ENCODE measurements at regions of chr17 and their contacts with region 1.

Region 1: DNA sequence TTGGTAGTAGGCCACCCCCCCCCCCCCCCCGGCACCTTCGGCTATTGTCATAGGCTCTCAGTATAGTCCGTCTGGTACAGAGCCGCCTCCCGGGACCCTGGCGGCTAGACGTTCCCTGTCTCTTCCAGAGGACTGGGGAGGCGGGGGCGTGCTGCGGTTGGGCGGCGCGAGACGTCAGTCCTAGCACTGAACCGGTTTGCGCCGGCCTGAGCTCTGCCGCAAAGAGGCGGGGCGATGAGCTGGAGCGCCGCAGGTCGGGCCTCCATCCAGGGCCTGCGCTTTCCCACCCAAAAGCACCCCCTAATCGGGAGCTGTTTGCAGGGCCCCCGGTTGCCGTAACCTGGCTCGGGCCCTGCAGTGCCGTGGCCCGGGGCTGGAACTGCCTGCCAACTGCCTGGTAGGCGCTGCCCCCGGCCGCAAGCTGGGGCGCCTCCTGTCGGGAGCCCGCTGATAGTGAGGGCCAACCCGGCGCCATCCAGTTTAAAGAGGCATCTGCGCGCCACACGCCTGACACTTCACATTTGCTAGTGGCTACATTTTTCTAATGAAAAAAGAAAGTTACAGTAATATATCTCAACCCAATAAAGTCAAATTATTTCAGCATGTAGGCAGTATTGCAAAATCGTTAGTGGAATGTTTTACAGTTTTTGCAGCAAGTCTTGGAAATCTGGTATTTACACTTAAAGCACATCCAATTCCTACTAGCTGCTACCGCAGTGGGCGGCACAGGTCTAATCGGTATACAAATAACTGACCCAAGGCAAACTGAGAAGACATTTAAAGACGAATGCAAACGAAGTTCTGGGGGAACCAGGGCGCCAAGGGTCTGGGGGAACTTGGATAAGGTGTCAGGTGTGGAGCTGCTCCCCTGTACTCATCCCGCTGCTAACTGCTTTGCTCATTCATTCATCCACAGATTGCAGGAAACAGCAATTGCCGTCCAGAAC is 748 bp upstream of the USP22 start:
- DNase-seq: peak in 1 of 2 donors; percentile 95
- ATAC-seq: peak; percentile 82
- H3K4me3 ChIP-seq: peak overlapping the region; percentile 61 to 97 (median 82)
- H3K27ac ChIP-seq: peak overlapping the region; percentile 86 to 98 (median 96)
- H3K4me1 ChIP-seq: peaks cover 25 to 33% of the 10 kb centered on the region in 2 donors
- H3K27me3 ChIP-seq: no peaks in the 10 kb centered on the region
- CTCF ChIP-seq: peak; percentile 94 to 98 (median 97)
- POLR2A ChIP-seq: no peak

Region 2: DNA sequence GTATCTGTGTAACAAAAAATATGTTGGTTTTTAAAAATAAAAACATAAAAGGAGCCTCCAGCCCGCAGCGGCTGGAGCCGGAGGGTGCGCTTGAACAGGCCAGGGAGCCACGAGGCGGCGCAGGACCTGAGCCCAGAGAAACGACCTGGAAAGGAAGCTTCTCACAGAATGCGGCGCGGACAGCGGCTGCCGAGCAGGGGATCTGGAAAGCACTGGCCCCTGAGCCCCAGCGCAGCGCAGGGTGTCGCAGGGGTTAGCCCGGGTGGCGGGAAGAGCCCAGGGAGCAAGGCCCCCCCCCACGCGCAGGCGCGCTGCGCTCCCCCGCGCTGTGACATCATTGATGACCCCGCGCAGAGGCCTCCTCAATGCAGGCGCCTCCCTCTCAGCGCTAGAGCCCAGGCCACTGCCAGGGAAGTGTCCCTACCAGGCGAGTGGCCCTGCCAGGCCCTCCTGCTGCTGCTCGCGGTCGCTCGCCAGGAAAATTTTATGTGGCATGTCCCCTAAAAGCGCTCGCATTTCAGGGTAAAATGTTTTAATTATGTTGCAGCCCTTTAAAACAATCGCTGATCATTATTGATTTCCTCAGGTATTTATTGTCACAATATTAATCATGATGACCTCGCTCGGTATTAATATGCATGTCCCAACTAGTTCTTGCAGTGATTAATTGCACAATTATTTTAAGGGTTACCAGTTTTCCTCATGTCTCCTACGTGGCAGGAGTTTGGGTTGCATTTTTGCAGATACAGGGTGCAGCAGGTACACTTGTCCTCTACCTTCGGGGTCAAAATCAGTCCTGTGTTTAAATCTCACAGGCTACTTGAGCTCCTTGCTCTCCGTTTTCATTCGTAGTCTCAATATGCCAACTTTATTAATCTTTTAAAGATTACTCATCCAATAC is 134.9 kb before region 1 on chr17:
- in situ Hi-C with region 1: no loop called
- intact Hi-C with region 1: loop called (anchors 2 kb)
- DNase-seq: peak; percentile 82 to 90
- ATAC-seq: peak; percentile 95 to 98
- H3K4me3 ChIP-seq: peak overlapping the region; percentile 58 to 85 (median 65)
- H3K27ac ChIP-seq: peak overlapping the region; percentile 88 to 96 (median 91)
- H3K4me1 ChIP-seq: peaks cover 6 to 16% of the 10 kb centered on the region in 2 donors
- H3K27me3 ChIP-seq: no peaks in the 10 kb centered on the region
- CTCF ChIP-seq: peak; percentile 47 to 73 (median 55)
- POLR2A ChIP-seq: peak in 1 of 2 donors; percentile 45

Region 3: GRCh38 chr17:21001813-21002221 is 41.7 kb before region 1 on chr17:
- in situ Hi-C with region 1: no loop called
- intact Hi-C with region 1: loop called (anchors 5 kb)
- DNase-seq: no peak
- ATAC-seq: peak in 1 of 2 donors; percentile 32
- H3K4me3 ChIP-seq: no peak overlapping the region
- H3K27ac ChIP-seq: peak overlapping the region; percentile 53 to 83 (median 67)
- H3K4me1 ChIP-seq: peaks cover 40 to 51% of the 10 kb centered on the region in 2 donors
- H3K27me3 ChIP-seq: no peaks in the 10 kb centered on the region
- CTCF ChIP-seq: no peak
- POLR2A ChIP-seq: no peak

Region 4: GRCh38 chr17:21075739-21076085 is 32.2 kb after region 1 on chr17:
- in situ Hi-C with region 1: no loop called
- intact Hi-C with region 1: loop called (anchors 2 kb)
- DNase-seq: no peak
- ATAC-seq: peak; percentile 77 to 88
- H3K4me3 ChIP-seq: peak overlapping the region; percentile 46 to 66 (median 54)
- H3K27ac ChIP-seq: peak overlapping the region; percentile 84 to 94 (median 84)
- H3K4me1 ChIP-seq: peaks cover 37 to 39% of the 10 kb centered on the region in 2 donors
- H3K27me3 ChIP-seq: no peaks in the 10 kb centered on the region
- CTCF ChIP-seq: no peak
- POLR2A ChIP-seq: no peak

Region 5: DNA sequence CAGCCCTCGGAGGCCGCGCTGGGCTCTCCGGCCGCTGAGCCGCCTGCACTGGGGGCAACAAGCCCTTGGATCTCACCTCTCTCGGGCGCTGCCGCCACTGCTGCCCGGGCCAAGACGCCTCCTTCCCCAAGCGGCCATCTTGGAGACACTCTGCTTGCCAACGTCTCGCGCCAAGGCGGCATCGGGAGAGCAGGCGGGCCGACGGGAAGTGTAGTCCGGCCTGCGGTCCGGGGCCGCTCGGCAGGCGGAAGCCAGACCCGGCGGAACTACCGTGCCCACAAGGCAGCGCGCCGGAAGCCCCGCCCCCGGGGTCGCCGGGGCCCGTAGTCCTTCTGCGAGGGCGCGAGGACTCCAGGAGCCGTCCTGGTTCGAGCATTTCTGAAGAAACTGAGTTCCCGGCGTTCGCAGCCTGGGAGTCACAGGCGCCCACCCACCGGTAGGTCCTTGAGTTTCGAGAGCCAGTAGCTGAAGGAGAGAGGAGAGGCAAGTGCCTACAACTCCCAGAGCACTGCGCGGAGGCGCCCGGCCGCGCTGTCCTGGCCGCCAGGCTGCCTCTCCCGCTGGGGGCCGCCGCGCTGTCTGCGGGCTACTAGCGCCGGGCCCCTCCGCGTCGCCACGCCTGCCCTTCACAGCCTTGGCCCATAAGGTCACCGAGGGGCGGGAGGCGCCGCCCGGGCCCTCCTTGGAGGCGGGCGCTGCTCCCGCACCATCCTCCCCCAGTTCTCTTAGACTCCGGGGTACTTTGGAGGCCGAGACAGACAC is 170.6 kb after region 1 on chr17 and contains the start of gene TMEM11:
- in situ Hi-C with region 1: no loop called
- intact Hi-C with region 1: loop called (anchors 5 kb)
- DNase-seq: peak; percentile 95
- ATAC-seq: peak; percentile 51 to 57
- H3K4me3 ChIP-seq: peak within 1 kb of the TSS; percentile 80 to 99 (median 93)
- H3K27ac ChIP-seq: peak within 1 kb of the TSS; percentile 92 to 98 (median 96)
- H3K4me1 ChIP-seq: peaks cover 57 to 58% of the 10 kb centered on the region in 2 donors
- H3K27me3 ChIP-seq: no peaks in the 10 kb centered on the region
- CTCF ChIP-seq: peak in 2 of 5 experiments; percentile 15 to 34
- POLR2A ChIP-seq: peak; percentile 84 to 93
- total RNA-seq, gene TMEM11: 70.6 to 131 (median 90.9) TPM

Region 6: DNA sequence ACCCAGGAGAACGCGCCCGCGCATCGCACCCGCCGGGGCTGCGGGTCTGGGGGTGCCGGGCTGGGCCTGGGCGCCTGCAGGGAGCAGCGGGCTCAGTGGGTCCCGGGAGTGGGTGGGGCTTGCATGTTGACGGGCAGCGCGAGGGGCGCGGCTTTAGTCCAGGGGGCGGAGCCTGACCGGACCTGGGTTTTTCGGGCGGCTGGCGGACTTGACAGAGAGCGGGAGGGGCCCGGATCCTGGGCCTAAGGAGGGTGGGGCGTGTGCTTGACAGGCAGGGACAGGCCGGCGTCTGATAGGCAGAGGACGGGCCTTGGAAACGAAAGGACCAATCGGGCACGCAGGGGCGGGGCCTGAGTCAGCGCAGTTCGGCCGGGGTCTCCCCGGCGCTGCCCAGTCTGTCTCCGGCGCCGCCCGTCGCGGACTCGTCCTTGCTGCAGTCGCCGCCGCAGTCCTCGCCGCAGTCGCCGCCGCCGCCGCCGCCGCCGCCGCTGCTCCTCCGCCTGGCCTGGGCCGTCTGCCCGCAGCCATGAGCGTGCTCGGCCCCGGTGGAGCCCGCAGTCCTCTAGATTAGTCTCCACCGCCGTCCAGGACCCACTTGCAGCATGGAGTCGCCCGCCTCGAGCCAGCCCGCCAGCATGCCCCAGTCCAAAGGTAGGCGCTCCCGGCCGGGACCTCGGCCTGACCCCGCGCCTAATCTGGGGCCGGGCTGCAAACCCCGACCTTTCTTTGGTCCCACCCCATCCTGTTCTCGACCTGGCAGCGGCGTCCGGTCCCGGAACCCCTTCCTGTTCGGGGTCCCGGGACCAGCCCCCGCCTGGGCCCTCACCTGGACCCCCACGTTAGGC is 241.0 kb after region 1 on chr17 and contains the start of gene MAP2K3:
- in situ Hi-C with region 1: loop called in 1 of 4 experiments (anchors 10 kb)
- intact Hi-C with region 1: loop called (anchors 2 kb)
- DNase-seq: peak; percentile 100
- ATAC-seq: peak; percentile 29 to 35
- H3K4me3 ChIP-seq: peak within 1 kb of the TSS; percentile 72 to 88 (median 84)
- H3K27ac ChIP-seq: peak within 1 kb of the TSS; percentile 94 to 99 (median 97)
- H3K4me1 ChIP-seq: peaks cover 58 to 62% of the 10 kb centered on the region in 2 donors
- H3K27me3 ChIP-seq: no peaks in the 10 kb centered on the region
- CTCF ChIP-seq: no peak
- POLR2A ChIP-seq: peak; percentile 98 to 99
- total RNA-seq, gene MAP2K3: 15.7 to 170 (median 63.8) TPM

Region 7: DNA sequence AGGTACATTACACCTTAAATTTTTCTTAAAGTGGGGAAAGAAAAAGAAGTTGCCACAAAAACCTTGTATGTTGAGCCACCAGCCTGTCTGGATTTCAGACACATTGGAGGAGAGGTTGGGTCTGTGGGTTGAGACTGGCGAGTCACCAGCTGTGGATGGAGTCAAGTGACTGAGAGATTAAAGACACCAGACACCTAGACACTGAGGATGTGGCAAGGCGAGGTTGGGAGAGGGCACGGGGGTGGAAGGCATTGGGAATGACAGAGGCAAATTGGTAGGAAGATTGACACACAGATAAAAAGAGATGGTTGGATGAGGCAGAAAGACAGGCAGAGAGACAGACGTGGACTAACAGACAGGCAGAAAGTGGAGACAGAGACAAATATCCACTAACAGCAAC is 382.2 kb after region 1 on chr17:
- in situ Hi-C with region 1: no loop called
- intact Hi-C with region 1: no loop called
- DNase-seq: no peak
- ATAC-seq: no peak
- H3K4me3 ChIP-seq: no peak overlapping the region
- H3K27ac ChIP-seq: no peak overlapping the region
- H3K4me1 ChIP-seq: peaks cover 0 to 3% of the 10 kb centered on the region in 2 donors
- H3K27me3 ChIP-seq: no peaks in the 10 kb centered on the region
- CTCF ChIP-seq: no peak
- POLR2A ChIP-seq: no peak

Measured in gastrocnemius medialis (tissue), 4 donors.